CD4-positive, alpha-beta memory T cell (primary cell): ENCODE measurements at regions of chr1 and their contacts with region 1.

Region 1: DNA sequence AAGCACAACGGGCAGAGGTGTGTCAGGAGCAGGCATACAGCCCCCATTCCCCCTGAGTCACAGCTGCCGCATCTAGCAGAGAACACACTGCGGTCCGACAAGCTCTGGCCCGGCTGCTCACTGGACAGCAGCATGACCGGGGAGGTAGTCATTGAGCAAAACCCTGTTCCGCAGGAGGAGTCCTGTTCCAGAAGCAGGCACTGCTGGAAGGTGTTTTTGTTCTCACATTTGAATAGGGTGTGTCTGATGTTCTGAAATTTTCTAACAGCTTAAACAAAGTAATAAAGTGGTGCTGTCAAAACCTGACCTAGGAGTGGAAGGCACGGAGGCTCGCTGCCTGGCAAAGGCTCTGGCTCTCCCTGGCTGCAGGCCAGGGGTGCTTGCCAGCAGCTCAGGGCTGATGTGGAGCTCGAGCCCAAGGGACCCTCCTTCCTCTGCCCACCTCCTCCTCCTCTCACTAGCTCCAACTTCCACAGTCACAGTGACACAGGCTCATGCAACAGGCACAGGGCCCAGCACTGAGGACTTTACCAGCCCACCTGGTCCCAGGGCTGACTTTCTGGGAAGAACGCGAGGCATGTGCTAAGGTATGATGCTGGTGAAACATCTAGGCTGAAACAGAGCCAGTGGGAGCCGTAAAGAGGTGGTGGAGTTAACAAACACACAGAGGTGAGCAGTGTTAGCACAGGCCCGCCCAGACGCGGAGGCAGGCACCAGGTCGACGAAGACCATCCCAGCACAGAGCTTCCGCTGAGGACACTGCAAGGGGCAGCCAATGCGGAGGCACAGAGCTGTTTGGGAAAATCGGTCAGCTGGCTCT is 118.6 kb upstream of the IFFO2 start:
- DNase-seq: peak in 1 of 5 donors; percentile 18
- H3K4me3 ChIP-seq: peak overlapping the region in 1 of 2 donors; percentile 3
- H3K4me3 Mint-ChIP-seq: peak overlapping the region; percentile 47 to 85 (median 74)
- H3K27ac ChIP-seq: peak overlapping the region; percentile 20
- H3K27ac Mint-ChIP-seq: peak overlapping the region; percentile 57 to 91 (median 85)
- H3K4me1 ChIP-seq: peaks cover 57% of the 10 kb centered on the region
- H3K4me1 Mint-ChIP-seq: peaks cover 37 to 66% (median 51%) of the 10 kb centered on the region in 4 donors
- H3K27me3 ChIP-seq: no peaks in the 10 kb centered on the region
- H3K27me3 Mint-ChIP-seq: no peaks in the 10 kb centered on the region

Region 2: DNA sequence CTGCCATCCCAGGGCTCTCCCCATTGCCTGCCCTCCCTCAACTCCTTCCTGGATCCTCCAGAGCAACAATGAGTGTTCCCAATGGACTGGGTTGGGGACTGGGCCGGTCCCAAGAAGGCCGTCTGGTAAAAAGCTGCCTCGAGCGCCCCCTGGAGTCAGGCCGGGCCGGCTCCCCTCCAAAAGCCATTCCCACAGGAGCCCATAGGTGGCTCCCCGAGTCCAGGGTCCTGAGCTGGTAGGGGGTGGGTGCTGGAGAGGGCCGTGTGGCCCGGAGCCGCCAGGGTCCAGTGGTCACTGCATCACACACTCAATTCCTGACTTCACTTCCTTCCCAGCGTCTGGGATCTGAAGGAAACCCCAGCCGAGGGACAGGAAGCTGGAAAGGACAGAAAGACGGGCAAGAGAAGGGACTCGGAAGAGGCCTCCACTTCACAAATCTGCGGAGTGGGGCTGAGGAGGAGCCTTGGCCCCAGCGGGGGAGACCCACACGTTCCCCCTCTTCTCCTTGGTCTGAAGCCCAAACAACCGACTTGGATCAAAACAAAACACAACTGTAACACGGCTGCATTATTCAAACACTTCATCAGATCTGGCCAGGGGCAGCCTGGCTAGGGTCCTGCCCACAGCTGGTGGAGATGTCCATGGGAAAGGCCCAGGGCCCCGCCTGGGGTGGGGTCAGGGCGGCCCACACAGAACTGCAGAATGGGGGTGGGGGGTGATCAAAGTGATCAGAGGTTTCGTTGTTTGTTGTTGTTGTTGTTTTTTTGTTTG is 161.9 kb before region 1 on chr1:
- CTCF ChIA-PET with region 1: interaction called, 19 read pairs
- POLR2A ChIA-PET with region 1: interaction called, 6 read pairs
- intact Hi-C with region 1: no loop called
- DNase-seq: peak; percentile 64 to 71 (median 66)
- H3K4me3 ChIP-seq: no peak overlapping the region
- H3K4me3 Mint-ChIP-seq: peak overlapping the region in 1 of 8 donors; percentile 41
- H3K27ac ChIP-seq: peak overlapping the region; percentile 5
- H3K27ac Mint-ChIP-seq: peak overlapping the region; percentile 62 to 90 (median 82)
- H3K4me1 ChIP-seq: no peaks in the 10 kb centered on the region
- H3K4me1 Mint-ChIP-seq: peaks cover 5 to 21% (median 8%) of the 10 kb centered on the region in 4 donors
- H3K27me3 ChIP-seq: no peaks in the 10 kb centered on the region
- H3K27me3 Mint-ChIP-seq: no peaks in the 10 kb centered on the region

Region 3: DNA sequence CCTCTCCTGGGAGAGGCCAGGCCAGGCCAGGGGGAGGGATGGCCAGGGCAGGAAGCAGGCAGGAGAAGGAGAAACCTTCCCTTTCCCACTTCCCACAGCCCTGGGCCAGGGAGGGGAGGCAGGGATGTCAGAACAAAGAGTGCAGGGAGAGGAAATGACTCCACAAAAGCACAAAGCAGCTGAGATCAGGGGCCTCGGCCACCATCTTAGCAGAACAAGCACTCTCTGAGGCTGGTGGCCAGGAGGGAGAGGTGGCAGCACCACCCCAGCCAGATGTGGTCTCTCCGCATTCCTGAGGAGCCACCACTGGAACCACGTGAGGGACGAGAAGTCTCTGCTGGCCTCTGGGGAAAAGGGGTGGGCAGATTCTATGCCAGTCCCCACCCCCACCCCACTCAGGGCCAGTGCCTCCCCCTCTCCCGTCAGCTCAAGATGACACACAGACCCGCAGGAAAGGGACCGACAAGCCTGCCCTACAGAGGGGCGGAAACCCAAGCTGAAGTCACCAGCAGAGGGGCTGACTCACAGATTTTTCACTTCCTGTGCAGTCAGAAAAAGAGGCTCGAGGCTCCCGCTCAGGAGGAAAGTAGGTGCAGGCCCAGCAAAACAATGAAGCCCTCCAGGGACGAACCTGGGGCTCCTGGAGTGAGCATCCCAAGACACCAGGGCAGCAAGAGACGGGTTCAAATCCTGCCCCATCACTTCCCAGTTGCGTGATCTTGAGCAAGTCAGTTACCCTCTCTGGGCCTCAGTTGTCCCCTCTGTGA is 148.6 kb before region 1 on chr1:
- CTCF ChIA-PET with region 1: interaction called, 7 read pairs
- POLR2A ChIA-PET with region 1: interaction called, 18 read pairs
- intact Hi-C with region 1: loop called (anchors 1 kb)
- DNase-seq: peak; percentile 75 to 95 (median 78)
- H3K4me3 ChIP-seq: peak overlapping the region; percentile 45 to 58
- H3K4me3 Mint-ChIP-seq: peak overlapping the region; percentile 78 to 89 (median 84)
- H3K27ac ChIP-seq: peak overlapping the region; percentile 75
- H3K27ac Mint-ChIP-seq: peak overlapping the region; percentile 87 to 99 (median 98)
- H3K4me1 ChIP-seq: peaks cover 99% of the 10 kb centered on the region
- H3K4me1 Mint-ChIP-seq: peaks cover 48 to 98% (median 83%) of the 10 kb centered on the region in 4 donors
- H3K27me3 ChIP-seq: no peaks in the 10 kb centered on the region
- H3K27me3 Mint-ChIP-seq: no peaks in the 10 kb centered on the region

Region 4: DNA sequence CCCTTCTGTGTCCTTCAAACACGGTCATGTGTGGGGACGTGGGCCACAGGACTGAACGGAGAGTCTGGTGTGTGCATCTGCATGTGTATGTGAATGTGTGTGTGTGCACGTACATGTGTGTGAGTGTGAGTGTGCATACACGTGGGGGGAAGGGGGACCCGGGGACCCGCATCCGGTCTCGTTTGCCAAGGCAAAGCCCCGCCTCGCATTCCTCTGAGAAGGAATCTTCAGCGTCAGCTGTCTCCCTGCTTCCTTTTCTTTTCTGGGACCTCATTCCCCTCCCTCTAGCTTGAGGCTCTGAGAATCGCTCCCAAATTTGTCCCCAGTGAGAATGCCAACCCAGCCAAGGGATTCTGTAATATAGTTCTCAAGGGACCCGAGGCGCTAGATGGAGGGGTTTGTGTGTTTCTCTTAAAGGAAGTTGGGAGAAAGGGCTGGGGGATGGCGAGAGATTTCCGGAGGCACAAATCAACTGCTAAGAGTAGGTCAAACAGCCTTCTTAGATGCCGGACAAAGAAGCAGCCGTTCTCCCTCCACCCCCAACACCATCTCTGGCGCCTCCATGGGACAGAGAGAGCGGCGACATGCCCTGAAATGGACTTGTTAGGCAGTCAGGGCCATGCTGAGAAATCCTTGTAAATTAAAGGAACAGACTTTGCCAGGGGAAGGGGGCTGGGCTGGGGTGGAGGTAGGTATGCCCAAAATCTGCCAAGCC is 125.3 kb before region 1 on chr1:
- CTCF ChIA-PET with region 1: interaction called, 3 read pairs
- POLR2A ChIA-PET with region 1: interaction called, 34 read pairs
- intact Hi-C with region 1: no loop called
- DNase-seq: no peak
- H3K4me3 ChIP-seq: peak overlapping the region; percentile 59 to 65
- H3K4me3 Mint-ChIP-seq: peak overlapping the region; percentile 91 to 98 (median 94)
- H3K27ac ChIP-seq: peak overlapping the region; percentile 98
- H3K27ac Mint-ChIP-seq: peak overlapping the region; percentile 98 to 100 (median 100)
- H3K4me1 ChIP-seq: peaks cover 100% of the 10 kb centered on the region
- H3K4me1 Mint-ChIP-seq: peaks cover 66 to 98% (median 87%) of the 10 kb centered on the region in 4 donors
- H3K27me3 ChIP-seq: no peaks in the 10 kb centered on the region
- H3K27me3 Mint-ChIP-seq: no peaks in the 10 kb centered on the region

Region 5: DNA sequence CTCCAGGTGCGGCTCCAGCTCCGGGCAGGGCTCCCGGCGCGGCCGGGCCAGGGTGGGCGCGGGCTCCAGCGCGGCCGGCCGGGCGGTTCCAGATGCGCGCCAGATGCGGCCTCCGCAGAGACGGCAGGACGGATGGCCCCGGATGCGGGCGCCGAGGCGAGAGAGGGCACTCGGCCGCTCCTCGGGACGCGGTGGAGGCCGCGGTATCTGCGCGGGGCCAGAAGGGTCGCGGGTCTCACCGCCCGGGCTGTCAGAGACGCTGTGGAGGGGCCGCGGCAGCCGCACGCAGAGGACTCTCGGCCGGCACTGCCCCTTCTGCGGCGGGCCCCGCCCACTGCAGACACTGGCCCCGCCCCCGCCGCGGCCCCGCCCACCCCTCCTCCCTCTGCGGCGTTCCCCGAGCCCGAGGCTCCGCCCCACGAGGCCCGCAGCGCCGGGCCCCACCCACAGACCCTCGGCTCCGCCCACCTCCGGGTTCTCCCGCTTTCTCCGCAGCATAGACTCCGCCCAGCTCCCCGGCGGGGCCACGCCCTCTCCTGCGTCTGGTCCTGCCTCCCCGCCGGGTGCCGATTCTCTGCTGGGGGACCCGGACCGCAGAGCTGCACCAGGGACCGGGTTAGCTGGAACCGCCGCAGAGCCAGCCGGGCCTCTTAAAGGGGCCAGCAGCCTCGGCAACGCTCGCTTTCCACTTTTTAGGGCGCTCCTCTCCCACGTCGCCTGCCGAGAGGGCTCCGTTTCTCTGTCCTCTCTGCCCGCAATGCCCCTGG is 118.6 kb before region 1 on chr1 and contains the start of gene IFFO2:
- CTCF ChIA-PET with region 1: no interaction called
- POLR2A ChIA-PET with region 1: interaction called, 34 read pairs
- intact Hi-C with region 1: loop called (anchors 2 kb)
- DNase-seq: peak; percentile 96 to 99 (median 97)
- H3K4me3 ChIP-seq: peak within 1 kb of the TSS in 1 of 2 donors; percentile 74
- H3K4me3 Mint-ChIP-seq: peak within 1 kb of the TSS; percentile 93 to 98 (median 94)
- H3K27ac ChIP-seq: peak within 1 kb of the TSS; percentile 98
- H3K27ac Mint-ChIP-seq: peak within 1 kb of the TSS; percentile 79 to 100 (median 99)
- H3K4me1 ChIP-seq: peaks cover 55% of the 10 kb centered on the region
- H3K4me1 Mint-ChIP-seq: peaks cover 31 to 66% (median 47%) of the 10 kb centered on the region in 4 donors
- H3K27me3 ChIP-seq: no peaks in the 10 kb centered on the region
- H3K27me3 Mint-ChIP-seq: no peaks in the 10 kb centered on the region
- total RNA-seq, gene IFFO2: 39.0 to 41.3 TPM

Region 6: DNA sequence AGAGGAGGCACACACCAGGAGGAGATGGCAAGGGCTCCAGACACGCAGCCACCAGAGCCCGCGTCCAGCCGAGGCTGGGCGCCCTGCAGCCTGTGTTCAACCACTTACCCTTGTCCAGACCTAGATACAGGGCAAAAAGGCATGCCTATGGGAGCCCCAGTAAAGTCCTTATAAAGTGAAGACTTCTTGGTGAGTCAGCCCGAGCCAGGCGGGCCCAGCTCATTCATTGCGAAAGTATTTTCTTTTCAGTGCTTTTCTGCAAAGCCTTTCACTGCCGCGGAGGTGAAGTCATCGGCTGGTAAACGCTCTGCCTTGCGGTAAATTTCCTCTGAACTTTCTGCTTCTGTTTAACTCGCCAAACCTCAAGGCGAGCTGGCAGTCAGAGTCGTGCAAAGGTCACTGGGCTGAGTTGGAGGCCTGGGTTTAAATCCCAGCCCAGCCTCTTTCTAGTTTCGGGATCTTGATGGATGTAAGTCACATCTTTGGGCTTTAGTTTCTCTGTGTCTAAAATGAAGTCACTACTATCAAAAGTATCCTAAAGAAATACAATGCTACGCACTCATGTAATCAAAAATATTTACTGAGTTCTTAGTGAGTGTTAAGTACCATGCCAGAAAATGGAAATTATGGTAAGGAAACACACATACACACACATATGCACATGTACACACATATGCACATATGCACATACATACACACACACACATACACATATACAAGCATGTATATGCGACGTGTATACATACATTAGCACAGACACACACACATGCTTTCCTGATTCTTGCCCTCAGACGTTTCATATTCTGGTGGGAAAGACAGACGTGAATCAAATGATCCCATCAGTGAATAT is 63.9 kb before region 1 on chr1:
- CTCF ChIA-PET with region 1: no interaction called
- POLR2A ChIA-PET with region 1: no interaction called
- intact Hi-C with region 1: loop called (anchors 1 kb)
- DNase-seq: peak; percentile 44 to 63 (median 48)
- H3K4me3 ChIP-seq: peak overlapping the region in 1 of 2 donors; percentile 14
- H3K4me3 Mint-ChIP-seq: peak overlapping the region; percentile 46 to 78 (median 62)
- H3K27ac ChIP-seq: no peak overlapping the region
- H3K27ac Mint-ChIP-seq: peak overlapping the region; percentile 37 to 93 (median 58)
- H3K4me1 ChIP-seq: peaks cover 18% of the 10 kb centered on the region
- H3K4me1 Mint-ChIP-seq: peaks cover 15 to 27% (median 18%) of the 10 kb centered on the region in 4 donors
- H3K27me3 ChIP-seq: no peaks in the 10 kb centered on the region
- H3K27me3 Mint-ChIP-seq: no peaks in the 10 kb centered on the region

Region 7: GRCh38 chr1:19096036-19096833 is 21.1 kb after region 1 on chr1:
- CTCF ChIA-PET with region 1: interaction called, 7 read pairs
- POLR2A ChIA-PET with region 1: interaction called, 11 read pairs
- intact Hi-C with region 1: loop called (anchors 2 kb)
- DNase-seq: peak in 3 of 5 donors; percentile 9 to 25 (median 15)
- H3K4me3 ChIP-seq: no peak overlapping the region
- H3K4me3 Mint-ChIP-seq: no peak overlapping the region
- H3K27ac ChIP-seq: no peak overlapping the region
- H3K27ac Mint-ChIP-seq: peak overlapping the region in 2 of 7 donors; percentile 7 to 69
- H3K4me1 ChIP-seq: no peaks in the 10 kb centered on the region
- H3K4me1 Mint-ChIP-seq: no peaks in the 10 kb centered on the region
- H3K27me3 ChIP-seq: no peaks in the 10 kb centered on the region
- H3K27me3 Mint-ChIP-seq: no peaks in the 10 kb centered on the region

Region 8: GRCh38 chr1:19110257-19110927 is 35.3 kb after region 1 on chr1:
- CTCF ChIA-PET with region 1: no interaction called
- POLR2A ChIA-PET with region 1: no interaction called
- intact Hi-C with region 1: no loop called
- DNase-seq: no peak
- H3K4me3 ChIP-seq: no peak overlapping the region
- H3K4me3 Mint-ChIP-seq: no peak overlapping the region
- H3K27ac ChIP-seq: no peak overlapping the region
- H3K27ac Mint-ChIP-seq: no peak overlapping the region
- H3K4me1 ChIP-seq: no peaks in the 10 kb centered on the region
- H3K4me1 Mint-ChIP-seq: peaks cover 0 to 2% (median 0%) of the 10 kb centered on the region in 4 donors
- H3K27me3 ChIP-seq: no peaks in the 10 kb centered on the region
- H3K27me3 Mint-ChIP-seq: no peaks in the 10 kb centered on the region

Region 9: DNA sequence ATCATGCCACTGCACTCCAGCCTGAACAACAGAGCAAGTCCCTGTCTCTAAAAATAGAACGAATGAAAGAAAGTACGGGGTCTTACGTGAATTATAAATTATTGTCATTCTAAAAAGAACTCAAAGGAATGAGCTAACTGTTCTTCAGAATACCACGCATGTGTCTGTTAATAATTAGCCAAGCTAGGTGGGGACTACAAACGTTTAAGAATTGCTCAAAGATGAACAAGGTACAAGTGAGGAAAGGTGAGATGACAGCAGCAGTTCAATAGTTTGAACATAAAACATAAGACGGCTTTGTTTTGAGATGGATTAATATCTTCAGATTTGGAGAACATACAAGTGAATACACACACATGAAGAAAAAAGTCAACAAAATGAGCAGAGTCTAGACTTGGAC is 55.4 kb after region 1 on chr1:
- CTCF ChIA-PET with region 1: no interaction called
- POLR2A ChIA-PET with region 1: no interaction called
- intact Hi-C with region 1: no loop called
- DNase-seq: no peak
- H3K4me3 ChIP-seq: no peak overlapping the region
- H3K4me3 Mint-ChIP-seq: no peak overlapping the region
- H3K27ac ChIP-seq: no peak overlapping the region
- H3K27ac Mint-ChIP-seq: peak overlapping the region in 1 of 7 donors; percentile 12
- H3K4me1 ChIP-seq: no peaks in the 10 kb centered on the region
- H3K4me1 Mint-ChIP-seq: peaks cover 1 to 5% (median 1%) of the 10 kb centered on the region in 4 donors
- H3K27me3 ChIP-seq: no peaks in the 10 kb centered on the region
- H3K27me3 Mint-ChIP-seq: no peaks in the 10 kb centered on the region